Posterior cingulate gyrus (tissue), 11 donors: ENCODE measurements at regions of chr16 and their contacts with region 1.

Region 1: GRCh38 chr16:48244080-48244862 is at the start of gene LONP2:
- DNase-seq: peak; percentile 89 to 99 (median 94)

Region 2: GRCh38 chr16:48276102-48276501 is 31.8 kb after region 1 on chr16:
- intact Hi-C with region 1: loop called (anchors 5 kb)
- DNase-seq: peak in 1 of 10 donors; percentile 16

Region 3: DNA sequence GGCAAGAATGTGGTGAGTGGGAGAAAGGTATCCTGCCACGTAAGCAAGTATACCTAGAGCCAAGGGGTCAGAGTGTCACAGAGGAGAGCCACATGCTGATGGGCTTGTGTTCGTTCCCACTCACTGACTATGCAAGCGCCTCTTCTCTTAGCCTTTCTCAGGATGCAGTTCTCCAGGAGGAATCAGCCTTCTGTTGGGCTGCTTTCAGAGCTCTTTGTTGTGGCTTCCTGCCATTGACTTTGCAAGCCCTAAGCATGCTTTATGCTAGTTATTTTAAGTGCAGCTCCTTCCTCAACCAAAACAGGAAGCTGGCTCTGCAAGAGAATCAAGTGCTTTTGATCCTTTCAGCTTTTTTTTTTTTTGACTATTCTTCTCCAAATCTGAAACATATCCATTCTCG is 74.4 kb after region 1 on chr16:
- intact Hi-C with region 1: no loop called
- DNase-seq: peak in 4 of 10 donors; percentile 19 to 81 (median 26)

Region 4: GRCh38 chr16:48609652-48610029 is 365.4 kb after region 1 on chr16:
- intact Hi-C with region 1: loop called (anchors 5 kb)
- DNase-seq: peak in 9 of 10 donors; percentile 28 to 93 (median 51)